Testis (tissue), 5 donors: ENCODE measurements at regions of chr4 and their contacts with region 1.

Region 1: DNA sequence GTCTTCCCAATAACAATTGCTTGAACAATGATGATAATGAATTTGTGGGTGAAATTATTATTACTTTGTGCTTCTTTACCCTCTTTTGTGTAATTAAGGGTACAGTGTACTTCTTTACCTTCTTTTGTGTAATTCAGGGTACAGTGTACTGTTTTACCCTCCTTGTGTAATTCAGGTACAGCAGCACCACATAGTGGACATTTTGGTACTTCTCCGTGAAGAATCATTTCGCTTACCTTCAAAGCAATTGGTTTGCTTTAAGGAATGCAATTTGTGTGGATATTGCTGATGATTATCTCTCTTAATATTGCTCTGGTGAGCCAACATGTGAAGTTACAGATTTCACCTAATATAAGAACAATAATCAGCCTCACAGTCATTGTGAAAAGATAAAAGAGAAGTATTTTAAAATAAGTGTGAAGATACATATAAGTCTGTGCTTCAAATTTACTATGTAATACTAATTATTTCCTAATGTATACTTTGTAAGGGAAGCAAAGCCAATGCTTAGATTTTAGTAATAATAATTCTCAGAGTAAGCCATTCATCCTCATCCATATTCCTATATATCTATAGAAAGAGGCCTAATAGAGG is 27.2 kb upstream of the SEC24B start:
- DNase-seq: peak; percentile 49
- H3K4me3 ChIP-seq: no peak overlapping the region
- H3K27ac ChIP-seq: no peak overlapping the region
- H3K4me1 ChIP-seq: no peaks in the 10 kb centered on the region
- H3K27me3 ChIP-seq: no peaks in the 10 kb centered on the region
- CTCF ChIP-seq: peak; percentile 53 to 60 (median 56)
- POLR2A ChIP-seq: no peak

Region 2: GRCh38 chr4:108834835-108835384 is 571.5 kb before region 1 on chr4:
- intact Hi-C with region 1: loop called (anchors 10 kb)
- DNase-seq: no peak
- H3K4me3 ChIP-seq: no peak overlapping the region
- H3K27ac ChIP-seq: no peak overlapping the region
- H3K4me1 ChIP-seq: no peaks in the 10 kb centered on the region
- H3K27me3 ChIP-seq: no peaks in the 10 kb centered on the region
- CTCF ChIP-seq: peak; percentile 52 to 63 (median 60)
- POLR2A ChIP-seq: no peak